Activated B cell treated with CpG ODN at 0.5 μM for 24 hours (primary cell): ENCODE measurements at regions of chr6 and their contacts with region 1.

Region 1: GRCh38 chr6:27687154-27688013 is 214.5 kb upstream of the ZNF184 start:
- DNase-seq: peak; percentile 63
- ATAC-seq: peak; percentile 73
- H3K4me3 Mint-ChIP-seq: peak overlapping the region; percentile 93
- H3K27ac Mint-ChIP-seq: peak overlapping the region; percentile 90
- H3K4me1 Mint-ChIP-seq: peaks cover 16% of the 10 kb centered on the region
- H3K27me3 Mint-ChIP-seq: peaks cover 4% of the 10 kb centered on the region
- CTCF ChIP-seq: no peak

Region 2: GRCh38 chr6:26568601-26569432 is 1118.6 kb before region 1 on chr6:
- CTCF ChIA-PET with region 1: no interaction called
- POLR2A ChIA-PET with region 1: no interaction called
- intact Hi-C with region 1: loop called (anchors 10 kb)
- DNase-seq: peak; percentile 98
- ATAC-seq: peak; percentile 80
- H3K4me3 Mint-ChIP-seq: peak overlapping the region; percentile 96
- H3K27ac Mint-ChIP-seq: peak overlapping the region; percentile 98
- H3K4me1 Mint-ChIP-seq: peaks cover 26% of the 10 kb centered on the region
- H3K27me3 Mint-ChIP-seq: peaks cover 3% of the 10 kb centered on the region
- CTCF ChIP-seq: no peak

Region 3: GRCh38 chr6:27479319-27480182 is 207.8 kb before region 1 on chr6:
- CTCF ChIA-PET with region 1: interaction called, 3 read pairs
- POLR2A ChIA-PET with region 1: interaction called, 7 read pairs
- intact Hi-C with region 1: loop called (anchors 1 kb)
- DNase-seq: peak; percentile 84
- ATAC-seq: peak; percentile 76
- H3K4me3 Mint-ChIP-seq: no peak overlapping the region
- H3K27ac Mint-ChIP-seq: no peak overlapping the region
- H3K4me1 Mint-ChIP-seq: peaks cover 9% of the 10 kb centered on the region
- H3K27me3 Mint-ChIP-seq: no peaks in the 10 kb centered on the region
- CTCF ChIP-seq: no peak

Region 4: DNA sequence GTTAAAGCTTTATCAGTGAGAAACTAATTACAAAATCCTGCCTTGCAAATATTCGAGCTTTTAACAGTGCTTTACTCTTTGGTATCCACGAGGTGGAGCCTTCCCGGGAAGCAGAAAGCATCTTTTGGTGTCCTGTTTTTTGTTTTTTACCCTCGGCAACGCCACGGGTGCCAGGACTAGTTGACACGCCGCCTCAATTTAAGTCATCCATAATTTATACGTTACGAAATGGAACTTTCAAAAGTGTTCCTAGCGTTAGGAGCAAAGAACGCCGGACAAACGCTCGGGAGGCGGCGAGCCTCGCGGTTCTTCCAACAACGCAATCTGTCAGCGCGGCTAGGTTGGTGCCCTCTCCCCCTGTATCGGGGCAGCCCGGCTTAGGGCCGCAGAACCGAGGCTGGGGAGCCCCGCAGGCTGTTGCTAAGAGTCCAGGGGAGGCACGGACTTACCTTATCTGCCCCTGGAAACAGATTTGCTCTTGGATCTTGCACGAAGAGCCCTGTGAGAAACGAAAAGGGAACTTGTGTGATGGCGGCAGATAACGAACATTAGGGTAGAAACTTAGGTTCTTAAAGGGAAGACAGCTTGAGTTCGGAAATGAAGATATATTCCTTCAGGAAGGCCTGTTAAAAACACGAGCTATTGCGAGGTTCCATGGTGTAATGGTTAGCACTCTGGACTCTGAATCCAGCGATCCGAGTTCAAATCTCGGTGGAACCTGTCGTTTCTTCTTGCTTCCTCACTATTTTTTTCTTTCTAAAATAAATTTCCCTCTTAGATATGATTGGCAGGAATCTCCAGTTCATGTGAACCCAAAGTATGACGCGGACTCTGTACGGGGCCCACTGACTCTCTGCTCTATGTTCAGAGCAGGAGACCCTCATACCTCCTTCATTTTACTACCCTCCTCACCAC is 168.2 kb before region 1 on chr6:
- CTCF ChIA-PET with region 1: interaction called, 6 read pairs
- POLR2A ChIA-PET with region 1: no interaction called
- intact Hi-C with region 1: loop called (anchors 1 kb)
- DNase-seq: peak; percentile 48
- ATAC-seq: peak; percentile 72
- H3K4me3 Mint-ChIP-seq: peak overlapping the region; percentile 83
- H3K27ac Mint-ChIP-seq: peak overlapping the region; percentile 82
- H3K4me1 Mint-ChIP-seq: peaks cover 15% of the 10 kb centered on the region
- H3K27me3 Mint-ChIP-seq: peaks cover 30% of the 10 kb centered on the region
- CTCF ChIP-seq: no peak

Region 5: DNA sequence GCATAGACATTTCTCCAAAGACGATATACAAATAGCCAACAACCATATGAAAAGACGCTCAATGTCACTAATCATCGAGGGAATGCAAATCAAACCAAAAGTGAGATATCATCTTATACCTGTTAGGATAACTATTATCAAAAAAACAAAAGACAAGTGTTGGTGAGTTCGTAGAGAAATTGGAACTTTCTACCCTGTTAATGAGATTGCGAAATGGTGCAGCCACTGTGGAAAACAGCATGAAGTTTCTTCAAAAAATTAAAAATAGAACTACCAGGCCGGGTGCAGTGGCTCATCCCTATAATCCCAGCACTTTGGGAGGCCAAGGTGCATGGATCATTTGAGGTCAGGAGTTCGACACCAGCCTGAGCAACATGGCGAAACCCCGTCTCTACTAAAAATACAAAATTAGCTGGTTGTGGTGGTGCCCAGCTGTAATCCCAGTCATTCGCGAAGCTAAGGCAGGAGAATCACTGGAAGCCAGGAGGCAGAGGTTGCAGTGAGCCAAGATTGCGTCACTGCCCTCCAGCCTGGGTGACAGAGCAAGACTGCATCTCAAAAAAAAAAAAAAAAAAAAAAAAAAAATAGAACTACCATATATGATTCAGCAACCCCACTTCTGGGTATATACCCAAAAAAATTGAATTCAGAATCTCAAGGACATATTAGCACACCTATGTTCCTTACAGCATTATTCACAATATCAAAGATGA is 44.5 kb before region 1 on chr6:
- CTCF ChIA-PET with region 1: no interaction called
- POLR2A ChIA-PET with region 1: no interaction called
- intact Hi-C with region 1: no loop called
- DNase-seq: no peak
- ATAC-seq: no peak
- H3K4me3 Mint-ChIP-seq: no peak overlapping the region
- H3K27ac Mint-ChIP-seq: no peak overlapping the region
- H3K4me1 Mint-ChIP-seq: no peaks in the 10 kb centered on the region
- H3K27me3 Mint-ChIP-seq: peaks cover 32% of the 10 kb centered on the region
- CTCF ChIP-seq: no peak

Region 6: GRCh38 chr6:27672113-27672799 is 15.1 kb before region 1 on chr6:
- CTCF ChIA-PET with region 1: interaction called, 6 read pairs
- POLR2A ChIA-PET with region 1: interaction called, 3 read pairs
- intact Hi-C with region 1: loop called (anchors 2 kb)
- DNase-seq: no peak
- ATAC-seq: no peak
- H3K4me3 Mint-ChIP-seq: peak overlapping the region; percentile 2
- H3K27ac Mint-ChIP-seq: peak overlapping the region; percentile 2
- H3K4me1 Mint-ChIP-seq: peaks cover 26% of the 10 kb centered on the region
- H3K27me3 Mint-ChIP-seq: peaks cover 65% of the 10 kb centered on the region
- CTCF ChIP-seq: no peak